ENCODE measurements at regions of chr15 and their contacts with region 1.

Region 1: DNA sequence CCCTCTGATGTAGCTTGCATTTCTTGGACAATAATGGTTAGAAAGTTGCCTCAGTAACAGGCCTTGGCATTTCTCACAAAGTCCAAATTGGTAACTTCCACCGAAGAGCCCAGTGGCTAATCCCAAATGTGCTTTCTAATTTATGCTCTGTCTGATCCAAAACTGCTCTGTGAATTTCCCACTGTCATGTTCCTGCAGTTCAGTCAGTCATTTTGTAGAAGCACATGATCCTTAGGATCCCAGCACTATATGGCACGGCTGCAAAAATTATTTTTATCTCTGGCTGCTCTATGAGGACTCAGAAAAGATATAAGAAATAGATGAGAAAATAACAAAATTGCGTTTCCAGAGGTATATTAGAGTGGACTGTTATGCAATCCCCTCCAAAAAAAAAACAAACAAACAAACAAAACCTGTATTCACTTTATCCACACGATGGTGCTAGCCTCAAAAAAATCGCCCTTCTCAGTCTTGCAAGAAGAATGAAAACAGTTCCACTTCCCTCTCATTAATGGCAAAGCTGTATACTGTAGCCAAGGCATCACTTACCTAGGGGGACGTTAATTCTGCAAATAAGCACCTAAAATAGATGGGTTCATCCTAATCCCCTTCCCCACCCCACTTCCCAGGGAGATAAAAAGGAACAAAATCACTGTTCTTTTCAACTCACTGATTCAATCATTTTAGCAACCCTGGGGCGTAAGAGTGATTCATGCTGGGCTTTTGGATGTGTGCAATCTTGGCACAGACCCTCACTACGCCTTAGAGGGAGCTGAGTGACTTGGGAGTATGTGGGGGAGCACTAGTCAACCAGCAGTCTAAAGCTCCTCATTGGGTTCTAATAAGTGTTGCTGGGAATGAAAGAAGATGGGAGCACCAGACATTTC is 61.3 kb downstream of the TMCO5A start:
- DNase-seq: peak; percentile 73
- ATAC-seq: peak; percentile 83
- H3K4me3 ChIP-seq: peak overlapping the region; percentile 6; the same call in 1 of the 2 replicates
- H3K27ac ChIP-seq: no peak overlapping the region
- H3K4me1 ChIP-seq: peaks cover 7% of the 10 kb centered on the region; the same call in 1 of the 2 replicates
- H3K27me3 ChIP-seq: no peaks in the 10 kb centered on the region
- CTCF ChIP-seq: peak; percentile 92

Region 2: GRCh38 chr15:37574985-37575384 is 420.7 kb before region 1 on chr15:
- CTCF ChIA-PET with region 1: no interaction called
- POLR2A ChIA-PET with region 1: no interaction called
- intact Hi-C with region 1: no loop called
- DNase-seq: peak; percentile 33
- ATAC-seq: peak; percentile 53
- H3K4me3 ChIP-seq: no peak overlapping the region
- H3K27ac ChIP-seq: no peak overlapping the region
- H3K4me1 ChIP-seq: no peaks in the 10 kb centered on the region
- H3K27me3 ChIP-seq: peaks cover 40% of the 10 kb centered on the region
- CTCF ChIP-seq: no peak

Region 3: DNA sequence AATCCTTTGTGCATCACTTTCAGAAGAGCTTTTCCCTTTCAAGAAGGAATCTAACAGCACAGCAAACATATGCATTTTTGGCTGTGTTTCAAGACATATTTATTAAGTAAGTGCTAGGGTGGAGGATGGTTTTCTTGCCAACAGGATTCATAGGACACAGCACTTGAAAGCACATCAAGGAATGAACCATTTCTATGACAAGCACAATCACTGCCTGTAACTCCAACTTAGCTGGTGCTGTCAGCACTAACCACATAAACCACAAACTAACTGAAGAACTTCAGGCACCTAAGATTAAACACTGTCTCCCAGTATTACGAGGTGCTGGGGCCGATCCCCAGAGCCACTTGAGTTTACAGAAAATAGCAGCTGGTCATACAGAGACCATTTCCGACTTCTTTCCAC is 221.5 kb after region 1 on chr15:
- CTCF ChIA-PET with region 1: interaction called, 11 read pairs
- POLR2A ChIA-PET with region 1: no interaction called
- intact Hi-C with region 1: no loop called
- DNase-seq: peak; percentile 82
- ATAC-seq: peak; percentile 77
- H3K4me3 ChIP-seq: peak overlapping the region; percentile 43; the same call in 1 of the 2 replicates
- H3K27ac ChIP-seq: peak overlapping the region; percentile 95
- H3K4me1 ChIP-seq: peaks cover 47% of the 10 kb centered on the region
- H3K27me3 ChIP-seq: no peaks in the 10 kb centered on the region
- CTCF ChIP-seq: no peak

Region 4: GRCh38 chr15:38354315-38354929 is 358.7 kb after region 1 on chr15:
- CTCF ChIA-PET with region 1: interaction called, 4 read pairs
- POLR2A ChIA-PET with region 1: no interaction called
- intact Hi-C with region 1: loop called (anchors 1 kb)
- DNase-seq: peak; percentile 87
- ATAC-seq: peak; percentile 85
- H3K4me3 ChIP-seq: no peak overlapping the region
- H3K27ac ChIP-seq: no peak overlapping the region
- H3K4me1 ChIP-seq: no peaks in the 10 kb centered on the region
- H3K27me3 ChIP-seq: no peaks in the 10 kb centered on the region
- CTCF ChIP-seq: peak; percentile 91

Region 5: DNA sequence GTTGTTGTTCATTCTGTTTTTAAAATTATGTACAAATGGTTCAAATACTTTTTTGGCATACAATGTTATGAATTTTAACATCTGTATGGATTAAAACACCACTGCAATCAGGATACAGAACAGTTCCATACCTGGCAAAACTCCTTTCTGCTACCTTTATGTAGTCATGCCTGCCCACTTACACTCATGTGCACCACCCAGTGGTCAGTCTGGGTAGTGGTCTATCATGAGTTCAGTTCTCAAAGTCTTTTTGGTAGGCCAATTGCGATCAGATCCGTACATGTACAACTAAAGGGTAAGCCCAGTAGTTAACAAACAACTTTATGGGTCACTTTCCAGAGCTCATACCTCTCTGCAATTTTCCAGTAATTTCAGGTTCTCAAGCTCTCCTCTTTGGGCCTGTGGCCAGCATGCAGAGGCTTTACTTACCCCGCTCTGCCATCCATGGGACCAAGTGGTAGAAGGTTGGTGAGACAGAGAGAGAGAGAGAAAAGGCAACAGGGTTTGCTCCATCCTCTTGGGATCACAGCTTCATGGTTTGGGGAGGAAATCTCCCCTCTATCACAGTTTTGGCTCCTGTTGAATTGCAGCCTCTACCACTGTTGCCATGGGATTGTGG is 394.3 kb after region 1 on chr15:
- CTCF ChIA-PET with region 1: no interaction called
- POLR2A ChIA-PET with region 1: no interaction called
- intact Hi-C with region 1: loop called (anchors 1 kb)
- DNase-seq: peak; percentile 81
- ATAC-seq: peak; percentile 93
- H3K4me3 ChIP-seq: no peak overlapping the region
- H3K27ac ChIP-seq: no peak overlapping the region
- H3K4me1 ChIP-seq: no peaks in the 10 kb centered on the region
- H3K27me3 ChIP-seq: no peaks in the 10 kb centered on the region
- CTCF ChIP-seq: peak; percentile 93

Region 6: GRCh38 chr15:38414357-38414756 is 418.7 kb after region 1 on chr15:
- CTCF ChIA-PET with region 1: interaction called, 5 read pairs
- POLR2A ChIA-PET with region 1: no interaction called
- intact Hi-C with region 1: loop called (anchors 1 kb)
- DNase-seq: peak; percentile 76
- ATAC-seq: peak; percentile 100
- H3K4me3 ChIP-seq: no peak overlapping the region
- H3K27ac ChIP-seq: no peak overlapping the region
- H3K4me1 ChIP-seq: no peaks in the 10 kb centered on the region
- H3K27me3 ChIP-seq: peaks cover 25% of the 10 kb centered on the region
- CTCF ChIP-seq: peak; percentile 93

Region 7: GRCh38 chr15:38683382-38684242 is 687.9 kb after region 1 on chr15:
- CTCF ChIA-PET with region 1: interaction called, 4 read pairs
- POLR2A ChIA-PET with region 1: no interaction called
- intact Hi-C with region 1: loop called (anchors 1 kb)
- DNase-seq: peak; percentile 65
- ATAC-seq: peak; percentile 93
- H3K4me3 ChIP-seq: no peak overlapping the region
- H3K27ac ChIP-seq: no peak overlapping the region
- H3K4me1 ChIP-seq: peaks cover under 1% of the 10 kb centered on the region
- H3K27me3 ChIP-seq: no peaks in the 10 kb centered on the region
- CTCF ChIP-seq: peak; percentile 86

Region 8: DNA sequence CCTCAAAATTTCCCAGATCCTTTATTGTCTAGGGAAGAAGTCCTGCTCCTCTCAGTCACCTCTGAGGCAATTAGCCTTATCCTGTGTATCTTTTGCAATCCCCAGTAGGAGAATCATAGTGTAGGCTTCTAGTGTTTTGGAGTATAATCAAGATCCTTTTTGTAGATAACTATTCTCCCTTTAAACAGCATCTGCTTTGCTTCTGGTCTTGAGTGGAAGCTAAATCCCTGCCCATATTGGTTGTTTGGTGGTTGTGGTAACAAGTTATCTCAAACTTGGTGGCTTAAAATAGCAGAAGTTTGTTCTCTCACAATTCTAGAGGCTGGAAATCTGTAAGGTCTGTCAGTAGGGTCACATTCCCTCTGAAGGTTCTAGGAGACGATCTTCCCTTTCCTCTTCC is 786.5 kb after region 1 on chr15:
- CTCF ChIA-PET with region 1: no interaction called
- POLR2A ChIA-PET with region 1: no interaction called
- intact Hi-C with region 1: loop called (anchors 5 kb)
- DNase-seq: no peak
- ATAC-seq: no peak
- H3K4me3 ChIP-seq: no peak overlapping the region
- H3K27ac ChIP-seq: no peak overlapping the region
- H3K4me1 ChIP-seq: no peaks in the 10 kb centered on the region
- H3K27me3 ChIP-seq: peaks cover 4% of the 10 kb centered on the region; the same call in 1 of the 2 replicates
- CTCF ChIP-seq: no peak